ENCODE measurements at regions of chr5 and their contacts with region 1.

Region 1: GRCh38 chr5:131505237-131505908 is 129.7 kb downstream of the RAPGEF6 start:
- DNase-seq: no peak
- H3K4me3 ChIP-seq: no peak overlapping the region
- H3K27ac ChIP-seq: no peak overlapping the region
- H3K4me1 ChIP-seq: no peaks in the 10 kb centered on the region
- H3K27me3 ChIP-seq: no peaks in the 10 kb centered on the region
- CTCF ChIP-seq: no peak
- EP300 ChIP-seq: no peak
- POLR2A ChIP-seq: no peak

Region 2: DNA sequence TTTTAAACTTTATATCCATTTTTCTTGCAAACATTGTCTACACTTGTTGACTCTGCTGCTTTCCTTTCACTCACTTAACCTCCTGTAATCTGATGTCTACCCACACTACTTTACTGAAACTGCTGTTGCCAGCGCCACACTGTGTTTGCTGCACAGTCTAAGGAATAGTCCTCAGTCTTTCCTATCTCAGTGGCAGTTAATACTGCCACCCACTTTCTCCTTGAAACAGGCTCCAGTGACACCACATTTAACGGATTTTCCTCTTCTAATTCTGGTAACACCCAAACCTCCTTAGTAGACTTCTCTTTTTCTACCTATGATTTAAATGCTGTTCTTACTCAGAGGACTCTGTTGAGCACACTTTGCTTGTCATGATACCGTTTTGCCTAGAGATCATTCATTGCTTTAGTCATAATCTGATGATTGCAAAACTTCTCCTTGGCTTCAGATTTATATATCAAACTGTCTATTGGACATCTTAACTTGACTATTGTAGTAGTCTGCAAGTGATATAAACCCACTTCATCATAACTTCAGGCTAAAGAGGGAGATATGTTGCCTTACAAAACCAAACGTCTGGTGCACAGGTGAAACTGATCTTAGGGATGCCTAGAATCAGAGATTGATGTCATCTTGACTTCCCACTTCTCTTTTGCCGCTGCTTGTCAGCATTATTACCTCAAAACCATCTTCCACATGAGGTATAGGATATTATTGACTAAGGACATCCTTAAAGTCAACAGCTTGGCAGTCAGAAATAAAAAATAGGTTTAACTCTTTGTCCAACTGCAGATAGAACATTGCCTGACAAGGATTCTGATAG is 147.4 kb before region 1 on chr5:
- intact Hi-C with region 1: no loop called
- DNase-seq: no peak
- H3K4me3 ChIP-seq: no peak overlapping the region
- H3K27ac ChIP-seq: no peak overlapping the region
- H3K4me1 ChIP-seq: no peaks in the 10 kb centered on the region
- H3K27me3 ChIP-seq: no peaks in the 10 kb centered on the region
- CTCF ChIP-seq: no peak
- EP300 ChIP-seq: no peak
- POLR2A ChIP-seq: no peak

Region 3: DNA sequence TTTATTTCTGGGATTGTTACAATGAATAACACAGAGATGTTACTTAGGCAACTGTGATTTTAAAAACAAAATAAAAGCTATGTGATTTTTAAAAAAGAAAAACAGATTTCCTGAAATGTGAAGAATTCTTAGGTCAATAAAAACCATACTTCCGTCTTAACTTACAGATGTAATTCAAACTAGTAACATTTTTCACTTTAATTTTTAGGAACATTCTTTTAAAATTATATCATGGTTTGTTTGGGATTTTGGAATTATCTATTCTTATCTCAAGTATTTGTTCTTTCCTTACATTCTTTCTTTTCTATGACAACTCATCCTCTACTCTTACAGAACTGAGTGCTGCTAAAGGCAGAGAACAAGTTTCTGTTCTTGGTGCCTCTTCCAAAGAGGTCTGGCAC is 29.8 kb before region 1 on chr5:
- intact Hi-C with region 1: loop called in 1 of 4 experiments (anchors 2 kb)
- DNase-seq: no peak
- H3K4me3 ChIP-seq: no peak overlapping the region
- H3K27ac ChIP-seq: no peak overlapping the region
- H3K4me1 ChIP-seq: no peaks in the 10 kb centered on the region
- H3K27me3 ChIP-seq: no peaks in the 10 kb centered on the region
- CTCF ChIP-seq: no peak
- EP300 ChIP-seq: no peak
- POLR2A ChIP-seq: no peak

Measured in ovary (tissue), 10 donors.